K562 (cell line): ENCODE measurements at regions of chr5 and their contacts with region 1.

Region 1: GRCh38 chr5:139670369-139671095 is 22.4 kb downstream of the CXXC5 start:
- DNase-seq: peak in 2 of 4 experiments; percentile 53 to 67
- ATAC-seq: peak; percentile 42
- H3K4me3 ChIP-seq: no peak overlapping the region; the same call in 1 of the 2 replicates
- H3K27ac ChIP-seq: peak overlapping the region; percentile 95
- H3K4me1 ChIP-seq: peaks cover 78 to 81% of the 10 kb centered on the region in 2 experiments
- H3K27me3 ChIP-seq: no peaks in the 10 kb centered on the region
- CTCF ChIP-seq: peak; percentile 58 to 70 (median 61)
- EP300 ChIP-seq: no peak
- POLR2A ChIP-seq: no peak
- RAD21 ChIP-seq: peak in 1 of 2 experiments; percentile 51; a peak in 2 of 4 replicates

Region 2: DNA sequence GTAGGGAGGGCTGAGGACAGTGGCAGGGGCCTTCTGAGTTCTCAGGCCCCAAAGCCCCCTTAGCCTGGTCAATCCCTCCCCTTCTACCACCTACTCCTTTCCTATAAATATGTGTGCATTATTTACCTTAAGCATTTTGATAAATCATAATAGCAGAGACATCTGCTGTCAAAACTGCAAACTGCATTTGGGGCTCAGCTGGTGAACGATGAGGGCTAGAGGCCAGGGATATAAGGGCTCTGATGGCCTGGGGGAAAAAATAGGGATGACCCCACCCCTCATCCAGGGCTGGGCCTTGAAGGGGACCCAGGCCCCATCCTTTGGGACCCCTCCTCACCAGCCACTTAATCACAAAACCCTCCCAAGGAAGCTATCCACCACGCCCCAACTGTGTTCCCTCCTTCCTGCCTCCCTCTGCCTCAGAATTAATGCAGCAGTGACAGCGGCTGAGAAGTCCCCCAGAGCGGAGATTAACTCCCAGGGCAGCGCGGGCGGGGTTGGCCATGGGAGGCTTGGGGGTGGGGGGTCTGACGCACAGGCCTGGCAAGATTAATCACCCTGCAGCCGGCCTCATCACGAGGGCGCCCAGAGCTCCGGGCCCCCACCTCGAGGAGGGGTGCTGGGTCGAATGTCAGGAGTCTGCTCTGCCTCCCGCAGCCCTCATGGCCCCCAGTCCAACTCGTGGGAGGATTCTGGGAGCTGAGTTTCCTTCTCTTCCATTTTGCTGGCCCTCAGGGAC is 19.7 kb after region 1 on chr5:
- CTCF ChIA-PET with region 1: interaction called, 3 read pairs
- POLR2A ChIA-PET with region 1: interaction called, 9 read pairs
- in situ Hi-C with region 1: no loop called
- intact Hi-C with region 1: loop called (anchors 2 kb)
- DNase-seq: peak; percentile 60 to 85 (median 70)
- ATAC-seq: peak; percentile 70
- H3K4me3 ChIP-seq: no peak overlapping the region
- H3K27ac ChIP-seq: peak overlapping the region; percentile 29
- H3K4me1 ChIP-seq: peaks cover 38 to 60% of the 10 kb centered on the region in 2 experiments
- H3K27me3 ChIP-seq: no peaks in the 10 kb centered on the region; a peak in 1 of 5 replicates
- CTCF ChIP-seq: peak; percentile 53 to 63 (median 56); a peak in 5 of 6 replicates
- EP300 ChIP-seq: no peak
- POLR2A ChIP-seq: no peak
- RAD21 ChIP-seq: peak; percentile 55 to 73; a peak in 3 of 4 replicates